Activated T-helper 1 cell treated with anti-CD3 and anti-CD28 coated beads, Interleukin-12 subunit alpha, Interleukin-12 subunit beta, Interleukin-2, Interleukin-4 antibody, amounts not matched to agents 30 ng/mL and 10 ng/mL and 1 ng/mL, durations not matched to agents 14 hours and 24 hours and 36 hours (primary cell): ENCODE measurements at regions of chr10 and their contacts with region 1.

Region 1: DNA sequence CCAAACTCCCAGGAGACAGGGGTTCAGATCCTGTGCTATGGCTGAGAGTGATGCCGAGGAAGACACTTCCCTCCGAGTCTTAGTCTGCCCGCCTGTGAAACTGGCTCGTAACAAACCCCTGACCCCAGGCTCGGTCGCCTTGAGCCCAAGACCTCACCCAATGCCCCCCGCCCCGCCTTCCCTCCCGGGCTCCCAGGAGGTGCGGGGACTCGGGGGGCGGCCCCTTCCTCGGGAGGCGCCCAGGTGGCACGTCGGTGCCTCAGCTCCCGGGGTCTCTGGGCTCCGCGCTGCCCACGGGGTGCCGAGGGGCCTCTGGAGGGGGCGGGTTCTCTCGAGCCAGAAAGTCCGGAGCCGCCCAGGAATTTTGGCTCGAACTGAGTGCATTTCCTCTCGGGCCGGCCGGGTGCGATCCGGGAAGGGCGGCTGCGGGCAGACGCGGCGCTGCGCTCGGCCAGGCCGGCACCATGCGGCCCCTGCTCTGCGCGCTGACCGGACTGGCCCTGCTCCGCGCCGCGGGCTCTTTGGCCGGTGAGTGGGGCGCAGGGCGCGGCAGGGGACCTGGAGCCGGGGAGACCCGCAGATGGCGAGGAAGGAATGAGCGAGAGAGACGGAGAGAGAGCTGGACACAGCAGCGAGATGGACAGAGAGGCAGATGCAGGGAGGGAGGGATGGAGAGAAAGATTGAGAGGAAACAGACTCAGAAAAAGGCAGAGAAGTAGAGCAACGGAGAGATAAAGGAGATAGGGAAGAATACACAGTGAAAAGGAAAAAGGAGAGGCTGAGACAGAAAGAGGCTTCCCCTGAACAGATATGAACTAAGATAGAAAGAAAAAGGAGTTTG is at the start of gene PLAC9:
- DNase-seq: no peak
- H3K4me3 Mint-ChIP-seq: no peak within 1 kb of the TSS
- H3K27ac Mint-ChIP-seq: no peak within 1 kb of the TSS
- H3K4me1 Mint-ChIP-seq: no peaks in the 10 kb centered on the region
- H3K27me3 Mint-ChIP-seq: peaks cover 38% of the 10 kb centered on the region
- total RNA-seq, gene PLAC9: not detected in 2 replicates

Region 2: GRCh38 chr10:80064120-80064886 is 68.2 kb before region 1 on chr10:
- intact Hi-C with region 1: loop called (anchors 1 kb)
- DNase-seq: no peak
- H3K4me3 Mint-ChIP-seq: no peak overlapping the region
- H3K27ac Mint-ChIP-seq: no peak overlapping the region
- H3K4me1 Mint-ChIP-seq: no peaks in the 10 kb centered on the region
- H3K27me3 Mint-ChIP-seq: peaks cover 3% of the 10 kb centered on the region

Region 3: GRCh38 chr10:80372675-80373074 is 240.2 kb after region 1 on chr10:
- intact Hi-C with region 1: no loop called
- DNase-seq: no peak
- H3K4me3 Mint-ChIP-seq: no peak overlapping the region
- H3K27ac Mint-ChIP-seq: no peak overlapping the region
- H3K4me1 Mint-ChIP-seq: no peaks in the 10 kb centered on the region
- H3K27me3 Mint-ChIP-seq: peaks cover 10% of the 10 kb centered on the region